Activated CD8-positive, alpha-beta T cell treated with anti-CD3 and anti-CD28 coated beads for 36 hours (primary cell): ENCODE measurements at regions of chr19 and their contacts with region 1.

Region 1: GRCh38 chr19:11380653-11381534 is 3.2 kb downstream of the EPOR start:
- DNase-seq: peak; percentile 99
- ATAC-seq: peak; percentile 86
- H3K4me3 Mint-ChIP-seq: peak overlapping the region; percentile 73
- H3K27ac Mint-ChIP-seq: peak overlapping the region; percentile 96
- H3K4me1 Mint-ChIP-seq: peaks cover 38% of the 10 kb centered on the region
- H3K27me3 Mint-ChIP-seq: peaks cover 13% of the 10 kb centered on the region
- CTCF ChIP-seq: peak; percentile 63

Region 2: DNA sequence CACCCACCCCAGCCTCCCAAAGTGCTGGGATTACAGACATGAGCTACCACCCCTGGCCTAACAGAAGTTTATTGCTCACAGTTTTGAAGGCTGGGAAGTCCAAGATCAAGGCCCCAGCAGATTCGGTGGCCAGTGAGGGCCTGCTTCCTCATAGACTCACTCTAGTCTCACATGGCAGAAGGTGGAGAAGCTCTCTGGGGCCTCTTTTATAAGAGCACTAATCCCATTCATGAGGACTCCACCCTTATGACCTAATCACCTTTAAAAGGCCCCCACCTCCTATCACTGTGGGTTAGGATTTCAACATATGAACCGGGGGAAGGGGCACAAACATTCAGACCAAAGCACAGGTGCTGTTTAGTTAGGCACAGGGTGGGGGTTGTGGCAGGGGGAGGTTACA is 13.4 kb before region 1 on chr19:
- CTCF ChIA-PET with region 1: interaction called, 14 read pairs
- POLR2A ChIA-PET with region 1: interaction called, 3 read pairs
- intact Hi-C with region 1: no loop called
- DNase-seq: no peak
- ATAC-seq: no peak
- H3K4me3 Mint-ChIP-seq: no peak overlapping the region
- H3K27ac Mint-ChIP-seq: no peak overlapping the region
- H3K4me1 Mint-ChIP-seq: no peaks in the 10 kb centered on the region
- H3K27me3 Mint-ChIP-seq: no peaks in the 10 kb centered on the region
- CTCF ChIP-seq: no peak

Region 3: GRCh38 chr19:11422163-11423021 is 41.5 kb after region 1 on chr19:
- CTCF ChIA-PET with region 1: interaction called, 29 read pairs
- POLR2A ChIA-PET with region 1: interaction called, 26 read pairs
- intact Hi-C with region 1: no loop called
- DNase-seq: peak; percentile 87
- ATAC-seq: peak; percentile 77
- H3K4me3 Mint-ChIP-seq: peak overlapping the region; percentile 65
- H3K27ac Mint-ChIP-seq: no peak overlapping the region
- H3K4me1 Mint-ChIP-seq: peaks cover 31% of the 10 kb centered on the region
- H3K27me3 Mint-ChIP-seq: peaks cover 54% of the 10 kb centered on the region
- CTCF ChIP-seq: no peak

Region 4: DNA sequence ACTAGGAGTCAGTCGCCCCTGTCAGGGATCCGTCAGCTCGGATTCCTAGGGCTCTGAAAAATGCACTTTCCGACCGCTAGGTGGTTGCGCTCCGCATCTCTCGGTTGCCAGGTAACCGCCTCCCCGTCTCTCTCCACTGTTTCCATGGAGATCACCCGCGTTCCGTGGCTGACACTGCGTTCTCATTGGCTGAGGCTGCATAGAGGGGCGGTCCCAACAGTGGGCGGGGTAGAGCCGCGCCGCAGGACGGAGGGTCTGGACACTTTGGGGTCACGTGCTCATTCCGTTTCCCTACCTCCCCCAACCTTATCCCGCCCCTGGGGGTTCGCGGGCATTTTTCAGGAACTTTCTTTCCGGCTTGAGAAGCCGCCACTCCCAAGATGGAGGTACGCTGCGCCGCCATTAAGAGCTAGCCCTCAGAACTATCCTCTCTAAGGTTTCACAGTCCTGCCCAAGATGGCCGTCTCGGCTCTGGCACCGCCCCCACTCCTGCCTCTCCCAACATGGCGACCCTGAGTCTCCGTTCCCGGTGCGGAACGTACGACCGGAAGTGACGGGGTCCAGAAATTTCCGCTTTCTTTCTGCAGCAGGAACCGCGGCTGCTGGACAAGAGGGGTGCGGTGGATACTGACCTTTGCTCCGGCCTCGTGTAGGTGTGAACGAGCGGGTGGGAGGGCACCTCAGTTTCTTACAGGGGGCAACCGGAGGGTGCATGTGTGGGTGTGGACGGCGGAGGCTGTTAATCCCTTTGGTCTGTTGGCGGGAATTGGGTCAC is 54.4 kb after region 1 on chr19 and contains the starts of genes ODAD3 and PRKCSH:
- CTCF ChIA-PET with region 1: interaction called, 17 read pairs
- POLR2A ChIA-PET with region 1: interaction called, 8 read pairs
- intact Hi-C with region 1: no loop called
- DNase-seq: peak; percentile 99
- ATAC-seq: peak; percentile 95
- H3K4me3 Mint-ChIP-seq: peak within 1 kb of the TSS; percentile 100
- H3K27ac Mint-ChIP-seq: peak within 1 kb of the TSS; percentile 97
- H3K4me1 Mint-ChIP-seq: peaks cover 18% of the 10 kb centered on the region
- H3K27me3 Mint-ChIP-seq: no peaks in the 10 kb centered on the region
- CTCF ChIP-seq: peak; percentile 96
- total RNA-seq, gene ODAD3: 0.47 to 0.70 TPM
- total RNA-seq, gene PRKCSH: 207 to 211 TPM

Region 5: GRCh38 chr19:11457831-11458230 is 76.9 kb after region 1 on chr19:
- CTCF ChIA-PET with region 1: no interaction called
- POLR2A ChIA-PET with region 1: no interaction called
- intact Hi-C with region 1: no loop called
- DNase-seq: no peak
- ATAC-seq: no peak
- H3K4me3 Mint-ChIP-seq: no peak overlapping the region
- H3K27ac Mint-ChIP-seq: no peak overlapping the region
- H3K4me1 Mint-ChIP-seq: no peaks in the 10 kb centered on the region
- H3K27me3 Mint-ChIP-seq: no peaks in the 10 kb centered on the region
- CTCF ChIP-seq: no peak

Region 6: DNA sequence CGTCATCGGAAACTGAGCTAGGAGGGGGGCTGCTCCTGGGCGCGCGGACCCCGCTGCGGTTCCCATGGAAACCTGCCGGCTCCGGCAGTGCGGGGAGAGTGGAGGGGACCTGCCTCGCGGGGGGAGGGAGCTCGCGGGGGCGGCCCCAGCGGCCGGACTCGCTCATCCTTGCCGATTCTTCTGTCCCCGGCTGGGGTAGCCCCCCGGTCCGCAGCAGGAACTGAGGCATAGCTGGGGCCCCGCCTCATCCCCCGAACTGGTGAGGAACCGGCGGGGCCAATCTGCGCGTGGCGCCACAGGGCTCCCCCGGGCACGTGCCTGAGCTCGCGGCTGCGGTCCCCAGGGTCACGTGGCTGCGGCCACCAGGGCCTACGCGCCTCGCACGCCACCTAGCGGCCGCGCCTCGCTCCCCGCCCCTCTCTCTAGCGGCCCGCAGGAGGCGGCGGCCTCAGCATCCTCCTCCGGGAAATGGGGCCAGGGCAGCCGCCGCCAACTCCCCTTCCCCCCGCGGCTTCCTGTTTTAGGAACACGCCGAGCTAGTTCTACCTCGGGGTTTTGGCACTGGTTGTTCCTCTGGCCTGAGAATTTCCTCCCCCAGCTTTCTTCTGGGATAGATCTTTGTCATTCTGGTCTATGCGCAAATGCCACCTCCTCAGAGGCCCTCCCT is 101.6 kb after region 1 on chr19:
- CTCF ChIA-PET with region 1: interaction called, 38 read pairs
- POLR2A ChIA-PET with region 1: interaction called, 8 read pairs
- intact Hi-C with region 1: no loop called
- DNase-seq: peak; percentile 94
- ATAC-seq: peak; percentile 59
- H3K4me3 Mint-ChIP-seq: peak overlapping the region; percentile 70
- H3K27ac Mint-ChIP-seq: peak overlapping the region; percentile 83
- H3K4me1 Mint-ChIP-seq: peaks cover 18% of the 10 kb centered on the region
- H3K27me3 Mint-ChIP-seq: peaks cover 21% of the 10 kb centered on the region
- CTCF ChIP-seq: peak; percentile 93